Vagina (tissue), 2 donors: ENCODE measurements at regions of chr2 and their contacts with region 1.

Region 1: GRCh38 chr2:43226558-43226954 is at the start of gene ZFP36L2:
- DNase-seq: peak in 1 of 2 donors; percentile 96
- H3K4me3 ChIP-seq: peak within 1 kb of the TSS; percentile 97 to 99
- H3K27ac ChIP-seq: peak within 1 kb of the TSS; percentile 99
- H3K4me1 ChIP-seq: peaks cover 24% of the 10 kb centered on the region
- H3K27me3 ChIP-seq: no peaks in the 10 kb centered on the region
- CTCF ChIP-seq: peak in 1 of 3 experiments; percentile 25
- POLR2A ChIP-seq: peak; percentile 60 to 92
- total RNA-seq, gene ZFP36L2: 206 TPM

Region 2: DNA sequence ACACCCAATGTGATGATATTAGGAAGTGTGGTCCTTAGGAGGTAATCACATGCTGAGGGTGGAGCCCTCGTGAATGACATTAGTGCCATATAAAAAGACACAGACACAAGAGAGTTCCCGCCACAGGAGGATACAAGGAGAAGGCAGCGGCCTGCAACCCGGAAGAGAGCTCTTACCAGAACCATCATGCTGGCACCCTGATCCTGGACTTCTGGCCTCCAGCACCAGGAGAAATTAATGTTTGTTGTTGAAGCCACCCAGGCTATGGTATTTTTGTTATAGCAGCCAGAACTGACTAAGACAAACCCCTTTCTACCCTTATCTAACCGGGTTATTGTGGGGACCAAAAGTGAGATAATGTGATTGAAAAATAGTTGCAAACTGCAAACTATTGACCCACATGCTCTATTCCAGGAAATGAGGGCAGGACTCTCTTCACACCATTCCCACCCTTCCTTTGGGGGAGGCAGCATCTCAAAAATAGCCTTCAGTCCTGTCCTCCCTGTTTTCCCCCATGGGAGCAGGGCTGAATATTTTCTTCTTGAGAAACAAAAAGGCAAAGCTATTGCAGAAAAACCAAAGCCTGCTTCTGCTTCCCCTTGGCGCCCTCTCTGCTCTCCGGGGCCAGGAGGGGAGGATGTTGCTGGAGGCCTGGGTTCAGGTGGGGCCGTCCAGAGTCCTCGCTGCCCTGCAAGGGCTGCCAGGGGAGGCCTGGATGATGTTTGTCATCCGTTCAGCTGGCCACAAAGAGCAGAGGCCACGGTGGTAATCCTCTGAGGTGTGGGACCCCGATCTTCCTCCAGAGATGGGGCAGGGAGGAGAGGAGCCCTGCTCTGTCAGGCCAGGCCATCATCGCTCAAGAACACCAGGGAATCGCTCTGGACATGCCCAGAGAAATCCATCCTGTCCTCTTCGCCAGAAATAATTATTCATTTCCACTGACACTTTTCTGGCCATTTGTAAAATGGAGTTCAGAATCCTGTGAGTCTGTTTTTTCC is 360.4 kb before region 1 on chr2:
- intact Hi-C with region 1: loop called (anchors 10 kb)
- DNase-seq: no peak
- H3K4me3 ChIP-seq: no peak overlapping the region
- H3K27ac ChIP-seq: peak overlapping the region; percentile 87
- H3K4me1 ChIP-seq: peaks cover 36% of the 10 kb centered on the region
- H3K27me3 ChIP-seq: no peaks in the 10 kb centered on the region
- CTCF ChIP-seq: no peak
- POLR2A ChIP-seq: no peak

Region 3: DNA sequence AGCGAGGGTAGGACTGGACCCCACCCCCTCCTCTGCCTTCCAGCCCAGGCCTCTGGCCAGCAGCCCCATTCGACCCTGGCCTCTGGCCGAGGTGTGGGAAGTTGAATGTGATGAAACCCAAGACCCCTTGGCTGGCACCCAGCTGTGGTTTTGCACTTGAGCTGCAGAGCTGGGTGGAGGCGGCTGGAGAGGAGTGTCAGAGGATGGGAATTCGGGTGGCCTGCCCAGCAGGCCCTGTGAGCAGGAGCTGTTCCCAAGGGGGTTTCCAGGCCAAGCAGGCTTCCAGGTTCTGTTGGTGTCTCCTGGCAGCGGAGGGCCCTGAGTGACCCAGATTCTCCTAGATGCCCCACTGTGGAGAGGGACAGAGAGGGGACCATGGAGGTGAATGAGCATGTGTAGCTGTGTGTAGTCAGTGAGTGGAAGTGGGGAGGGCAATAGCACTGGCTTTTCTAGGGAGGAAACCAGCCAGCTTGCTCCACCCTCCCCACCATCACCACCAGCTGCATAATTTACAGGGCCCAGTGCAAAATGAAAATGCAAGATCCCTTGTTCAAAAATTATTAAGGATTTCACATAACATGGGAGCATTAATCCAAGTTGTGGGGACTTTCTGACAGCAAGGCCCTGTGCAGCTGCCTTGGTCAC is 262.0 kb before region 1 on chr2:
- intact Hi-C with region 1: loop called (anchors 5 kb)
- DNase-seq: peak in 1 of 2 donors; percentile 89
- H3K4me3 ChIP-seq: no peak overlapping the region
- H3K27ac ChIP-seq: peak overlapping the region; percentile 87
- H3K4me1 ChIP-seq: peaks cover 90% of the 10 kb centered on the region
- H3K27me3 ChIP-seq: no peaks in the 10 kb centered on the region
- CTCF ChIP-seq: no peak
- POLR2A ChIP-seq: no peak

Region 4: GRCh38 chr2:43024515-43025011 is 202.0 kb before region 1 on chr2:
- intact Hi-C with region 1: loop called (anchors 5 kb)
- DNase-seq: no peak
- H3K4me3 ChIP-seq: no peak overlapping the region
- H3K27ac ChIP-seq: no peak overlapping the region
- H3K4me1 ChIP-seq: peaks cover 39% of the 10 kb centered on the region
- H3K27me3 ChIP-seq: no peaks in the 10 kb centered on the region
- CTCF ChIP-seq: peak; percentile 48 to 84 (median 76)
- POLR2A ChIP-seq: no peak

Region 5: DNA sequence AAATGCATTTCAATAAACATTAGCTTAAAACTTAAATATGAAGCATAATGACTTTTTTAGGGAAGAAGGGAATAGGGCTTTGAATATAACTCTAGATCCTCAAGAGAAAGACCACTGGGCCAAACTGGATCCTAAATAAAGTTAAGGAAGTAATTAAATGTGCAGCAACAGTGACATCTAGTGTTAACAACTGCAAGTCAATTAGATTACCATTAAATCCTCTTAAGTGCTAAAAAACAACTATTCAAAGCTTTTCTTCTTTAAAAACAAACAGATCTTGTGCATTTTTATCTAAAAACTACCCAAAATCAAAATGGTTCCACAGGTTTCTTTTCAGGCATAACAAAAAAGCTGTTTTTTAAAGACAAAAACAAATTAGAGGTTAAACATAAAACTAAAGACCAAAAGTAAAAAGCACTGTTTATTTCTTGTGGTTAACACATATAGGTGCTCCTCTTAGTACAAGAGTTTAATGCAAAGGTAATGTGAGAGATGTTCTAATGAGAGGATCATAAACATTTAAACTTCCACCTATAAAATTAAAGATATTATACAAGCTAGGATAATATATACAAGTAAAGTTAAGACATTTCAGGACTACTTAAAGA is 257.9 kb after region 1 on chr2:
- intact Hi-C with region 1: loop called (anchors 2 kb)
- DNase-seq: no peak
- H3K4me3 ChIP-seq: no peak overlapping the region
- H3K27ac ChIP-seq: peak overlapping the region; percentile 63
- H3K4me1 ChIP-seq: peaks cover 33% of the 10 kb centered on the region
- H3K27me3 ChIP-seq: no peaks in the 10 kb centered on the region
- CTCF ChIP-seq: peak; percentile 56 to 78 (median 58)
- POLR2A ChIP-seq: no peak